Right lobe of liver (tissue), 6 donors: ENCODE measurements at regions of chr1 and their contacts with region 1.

Region 1: DNA sequence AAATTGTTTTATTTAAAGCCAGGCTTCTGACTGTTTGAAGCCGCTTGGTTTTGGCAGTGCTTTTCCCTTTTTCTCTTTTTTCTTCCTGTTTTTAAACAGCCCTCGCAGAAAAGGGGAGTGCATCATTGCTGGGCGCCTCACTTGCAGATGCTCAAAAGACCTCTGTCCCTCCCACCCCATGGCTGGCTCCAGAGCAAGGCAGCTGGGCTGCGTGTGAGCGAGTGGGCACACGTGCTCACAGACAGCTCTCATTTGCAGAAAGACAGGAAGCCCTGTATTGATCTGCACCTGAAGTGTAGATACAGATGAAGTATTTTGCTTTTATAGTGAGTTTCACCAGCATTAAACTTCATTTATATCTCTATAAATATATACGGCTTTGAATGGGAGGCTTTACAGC is 8.8 kb downstream of the TNR start:
- DNase-seq: no peak
- ATAC-seq: peak in 2 of 4 donors; percentile 21 to 68
- H3K4me3 ChIP-seq: no peak overlapping the region
- H3K27ac ChIP-seq: no peak overlapping the region
- H3K4me1 ChIP-seq: no peaks in the 10 kb centered on the region
- H3K27me3 ChIP-seq: no peaks in the 10 kb centered on the region
- CTCF ChIP-seq: no peak
- POLR2A ChIP-seq: no peak

Region 2: DNA sequence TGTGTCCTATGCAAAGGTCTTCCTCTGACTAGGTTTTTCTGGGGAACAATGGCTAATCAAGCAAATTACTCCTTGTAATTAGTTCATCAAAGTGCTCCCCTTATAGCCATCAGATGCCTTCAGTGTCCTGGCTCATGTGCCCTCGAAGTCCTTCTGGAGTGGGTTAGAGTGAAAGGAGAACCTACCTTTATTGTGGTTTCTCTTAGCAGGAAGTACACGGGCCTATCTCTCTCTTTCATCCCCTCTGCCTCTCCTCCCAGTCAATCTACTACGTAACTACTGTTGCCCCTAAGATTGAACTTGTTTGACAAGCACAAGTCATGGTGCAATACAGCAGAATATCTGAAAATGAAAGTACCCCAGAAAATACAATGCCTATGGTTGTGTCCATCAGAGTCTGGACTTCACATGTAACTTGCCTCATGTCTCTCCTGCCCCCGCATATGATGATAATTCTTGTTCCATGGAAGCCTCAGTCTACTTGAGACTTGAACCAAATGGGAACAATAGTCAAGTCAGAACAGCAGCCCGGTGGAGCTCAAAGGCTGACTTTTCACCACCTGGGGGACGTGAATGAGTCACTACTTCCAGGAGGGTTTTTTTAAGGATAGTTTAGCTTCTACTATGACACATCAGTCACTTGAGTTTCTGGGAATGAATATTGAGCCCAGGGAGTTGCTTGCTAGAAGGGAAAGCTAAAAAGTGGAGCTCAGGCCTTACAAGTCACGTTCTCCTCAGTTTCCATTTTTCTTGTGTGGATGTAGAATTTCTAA is 234.9 kb before region 1 on chr1:
- intact Hi-C with region 1: loop called in 1 of 2 experiments (anchors 10 kb)
- DNase-seq: no peak
- ATAC-seq: no peak
- H3K4me3 ChIP-seq: no peak overlapping the region
- H3K27ac ChIP-seq: no peak overlapping the region
- H3K4me1 ChIP-seq: no peaks in the 10 kb centered on the region
- H3K27me3 ChIP-seq: no peaks in the 10 kb centered on the region
- CTCF ChIP-seq: no peak
- POLR2A ChIP-seq: no peak

Region 3: GRCh38 chr1:175591083-175591743 is 143.4 kb before region 1 on chr1:
- intact Hi-C with region 1: no loop called
- DNase-seq: peak in 1 of 3 donors; percentile 32
- ATAC-seq: peak in 1 of 4 donors; percentile 33
- H3K4me3 ChIP-seq: no peak overlapping the region
- H3K27ac ChIP-seq: no peak overlapping the region
- H3K4me1 ChIP-seq: no peaks in the 10 kb centered on the region
- H3K27me3 ChIP-seq: no peaks in the 10 kb centered on the region
- CTCF ChIP-seq: no peak
- POLR2A ChIP-seq: no peak